ENCODE measurements at regions of chr18 and their contacts with region 1.

Region 1: DNA sequence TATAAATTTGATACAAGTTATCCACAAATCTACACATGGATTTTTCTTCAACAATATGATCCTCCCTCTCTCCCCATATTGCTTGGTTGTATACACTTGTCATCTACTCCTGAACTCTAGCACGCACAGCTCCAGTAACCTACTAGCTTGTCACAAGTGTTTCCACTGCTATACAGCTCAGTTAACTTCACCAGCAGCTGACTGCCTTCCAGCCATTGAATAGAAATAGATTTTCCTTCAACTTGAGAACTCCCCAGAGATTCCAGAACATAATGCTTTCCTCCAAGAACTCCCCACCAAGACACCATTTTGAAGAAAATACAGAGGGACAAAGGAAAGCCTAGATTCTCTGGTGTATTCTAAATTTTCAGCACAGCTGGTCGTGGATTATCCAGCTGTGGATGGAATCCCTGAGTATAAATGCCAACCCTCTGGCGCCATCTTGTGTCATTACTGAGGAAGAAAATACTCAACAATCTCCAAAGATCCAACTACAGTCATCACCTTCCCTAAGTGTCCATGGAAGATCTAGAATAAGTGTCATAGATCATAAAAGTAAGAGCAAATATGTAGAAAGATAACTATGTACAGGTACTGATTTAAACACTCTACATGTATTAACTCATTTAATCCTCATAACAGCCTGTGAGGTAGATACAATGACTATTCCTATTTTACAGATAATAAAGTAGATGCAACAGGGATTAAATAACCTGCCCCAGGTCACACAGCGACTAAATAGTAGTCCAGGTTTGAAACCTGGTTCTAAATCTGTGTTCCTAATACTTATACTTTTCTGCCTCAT is 156.7 kb downstream of the ARHGAP28 start:
- DNase-seq: peak in 1 of 3 donors; percentile 63
- ATAC-seq: peak; percentile 65
- H3K4me3 ChIP-seq: no peak overlapping the region
- H3K4me1 ChIP-seq: no peaks in the 10 kb centered on the region
- CTCF ChIP-seq: no peak

Region 2: DNA sequence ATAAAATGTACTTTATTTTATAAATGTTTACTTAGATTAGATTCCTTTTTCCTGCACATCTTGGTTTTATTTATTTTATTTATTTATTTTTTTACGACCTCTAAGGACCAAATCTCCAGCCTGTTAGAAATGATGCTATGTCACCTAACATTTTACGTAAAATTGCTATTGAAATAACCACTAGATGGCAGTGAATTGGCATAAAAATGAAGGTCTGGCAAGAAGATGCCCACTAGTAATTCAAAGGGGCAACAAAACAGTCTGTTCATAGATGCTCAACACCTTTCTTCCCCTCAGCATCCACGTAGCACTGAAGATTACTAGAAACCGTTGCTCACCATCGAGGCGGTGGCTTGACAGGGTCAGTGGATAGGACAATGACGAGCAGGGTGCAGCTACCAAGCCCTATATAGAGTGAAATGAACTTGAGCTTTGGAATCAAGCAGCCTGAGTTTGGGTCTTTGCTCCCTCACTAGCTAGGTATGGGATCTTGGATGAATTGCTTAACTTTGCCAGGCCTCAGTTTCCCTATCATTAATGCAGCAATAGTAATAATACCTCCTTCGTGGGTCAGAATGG is 342.8 kb before region 1 on chr18:
- intact Hi-C with region 1: loop called (anchors 5 to 10 kb)
- DNase-seq: no peak
- ATAC-seq: no peak
- H3K4me3 ChIP-seq: no peak overlapping the region
- H3K4me1 ChIP-seq: no peaks in the 10 kb centered on the region
- CTCF ChIP-seq: no peak

Region 3: DNA sequence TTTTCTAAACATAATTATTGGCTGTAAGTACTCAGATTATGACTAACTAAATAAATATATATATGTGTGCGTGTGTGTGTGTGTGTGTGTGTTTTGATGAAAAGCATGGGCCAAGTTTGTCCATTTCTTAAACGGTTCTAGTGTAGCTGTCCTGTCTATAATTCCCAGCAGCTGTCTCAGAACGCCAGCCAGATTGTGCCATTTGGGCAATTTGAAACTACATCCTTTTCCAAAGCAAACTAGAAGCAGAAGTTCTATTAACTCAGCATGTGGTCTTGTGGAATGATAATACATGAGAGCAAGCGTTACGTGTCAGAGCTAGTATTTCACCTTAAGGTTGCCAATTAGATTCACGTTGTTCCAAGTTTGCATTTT is 155.0 kb before region 1 on chr18:
- intact Hi-C with region 1: no loop called
- DNase-seq: peak in 1 of 3 donors; percentile 5
- ATAC-seq: no peak
- H3K4me3 ChIP-seq: no peak overlapping the region
- H3K4me1 ChIP-seq: no peaks in the 10 kb centered on the region
- CTCF ChIP-seq: no peak

Region 4: DNA sequence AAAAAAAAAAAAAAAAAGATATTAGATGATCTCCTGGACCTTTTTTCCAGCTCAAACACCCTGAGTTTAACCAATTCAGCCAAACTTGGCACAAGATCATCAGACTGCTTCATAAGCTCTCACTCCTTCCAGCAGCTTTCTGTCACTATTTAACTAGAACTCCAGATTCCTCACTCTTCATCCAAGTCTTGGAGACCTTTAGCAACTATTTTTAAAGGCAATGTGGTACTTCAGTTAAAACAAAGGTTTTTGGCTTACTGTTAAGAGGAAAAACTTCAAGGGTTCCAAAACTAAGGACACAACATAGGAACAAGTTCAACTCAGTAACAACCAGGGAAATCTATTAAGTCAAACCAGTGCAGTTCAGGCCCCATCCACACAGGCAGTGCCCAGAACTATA is 208.2 kb after region 1 on chr18:
- intact Hi-C with region 1: no loop called
- DNase-seq: no peak
- ATAC-seq: no peak
- H3K4me3 ChIP-seq: no peak overlapping the region
- H3K4me1 ChIP-seq: no peaks in the 10 kb centered on the region
- CTCF ChIP-seq: no peak

Region 5: DNA sequence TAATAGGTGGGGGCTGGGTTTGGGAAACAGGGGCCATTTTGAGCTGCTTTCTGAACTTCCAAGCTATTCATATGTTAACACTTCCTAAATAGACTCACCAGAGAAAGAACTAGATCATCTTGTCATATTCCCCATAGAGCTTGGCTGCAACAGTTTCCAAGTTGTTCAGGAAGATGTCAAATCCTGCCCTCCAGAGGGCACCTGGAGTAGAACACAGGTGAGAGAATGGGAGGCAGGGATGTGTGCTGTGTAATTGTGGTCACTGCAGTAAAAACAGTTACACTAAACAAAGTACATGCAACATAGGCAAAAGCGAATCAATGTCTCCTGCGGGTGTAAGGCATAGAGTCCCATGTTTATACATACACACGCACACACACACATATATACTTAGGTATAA is 310.2 kb after region 1 on chr18:
- intact Hi-C with region 1: no loop called
- DNase-seq: no peak
- ATAC-seq: no peak
- H3K4me3 ChIP-seq: no peak overlapping the region
- H3K4me1 ChIP-seq: no peaks in the 10 kb centered on the region
- CTCF ChIP-seq: no peak